ENCODE measurements at regions of chr11 and their contacts with region 1.

Region 1: DNA sequence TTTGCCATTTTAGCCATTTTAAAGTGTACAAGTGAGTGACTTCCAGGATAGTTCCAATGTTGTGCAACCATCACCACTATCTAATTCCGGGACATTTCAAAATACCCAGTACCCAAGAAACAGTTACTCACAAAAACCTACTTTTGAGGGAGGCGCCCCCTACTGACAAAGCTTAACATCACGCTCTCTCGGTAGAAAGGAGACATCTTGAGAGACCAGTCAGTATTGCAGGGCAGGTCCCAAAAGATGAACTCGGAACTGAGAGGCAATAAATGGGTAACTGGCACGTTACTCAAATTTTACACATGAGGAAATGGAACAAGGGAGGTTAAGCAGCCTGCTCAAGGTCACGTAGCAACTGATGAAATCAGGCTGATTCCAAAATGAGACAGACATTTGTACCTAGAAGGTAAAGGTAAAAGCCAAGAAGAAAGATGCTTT is 50.0 kb upstream of the POU2AF1 start:
- DNase-seq: peak; percentile 79
- ATAC-seq: peak; percentile 51
- H3K4me3 Mint-ChIP-seq: no peak overlapping the region
- H3K27ac Mint-ChIP-seq: no peak overlapping the region
- H3K4me1 Mint-ChIP-seq: no peaks in the 10 kb centered on the region
- H3K27me3 Mint-ChIP-seq: peaks cover 12% of the 10 kb centered on the region

Region 2: GRCh38 chr11:111283945-111284481 is 145.1 kb before region 1 on chr11:
- CTCF ChIA-PET with region 1: interaction called, 95 read pairs
- POLR2A ChIA-PET with region 1: interaction called, 3 read pairs
- DNase-seq: no peak
- ATAC-seq: no peak
- H3K4me3 Mint-ChIP-seq: no peak overlapping the region
- H3K27ac Mint-ChIP-seq: no peak overlapping the region
- H3K4me1 Mint-ChIP-seq: no peaks in the 10 kb centered on the region
- H3K27me3 Mint-ChIP-seq: peaks cover 3% of the 10 kb centered on the region

Region 3: GRCh38 chr11:111378861-111379601 is 50.1 kb before region 1 on chr11 and contains the start of gene POU2AF1:
- CTCF ChIA-PET with region 1: interaction called, 18 read pairs
- POLR2A ChIA-PET with region 1: no interaction called
- DNase-seq: peak; percentile 89
- ATAC-seq: peak; percentile 87
- H3K4me3 Mint-ChIP-seq: peak within 1 kb of the TSS; percentile 70
- H3K27ac Mint-ChIP-seq: peak within 1 kb of the TSS; percentile 95
- H3K4me1 Mint-ChIP-seq: peaks cover 41% of the 10 kb centered on the region
- H3K27me3 Mint-ChIP-seq: no peaks in the 10 kb centered on the region
- total RNA-seq, gene POU2AF1: 1.7 to 2.4 TPM

Region 4: DNA sequence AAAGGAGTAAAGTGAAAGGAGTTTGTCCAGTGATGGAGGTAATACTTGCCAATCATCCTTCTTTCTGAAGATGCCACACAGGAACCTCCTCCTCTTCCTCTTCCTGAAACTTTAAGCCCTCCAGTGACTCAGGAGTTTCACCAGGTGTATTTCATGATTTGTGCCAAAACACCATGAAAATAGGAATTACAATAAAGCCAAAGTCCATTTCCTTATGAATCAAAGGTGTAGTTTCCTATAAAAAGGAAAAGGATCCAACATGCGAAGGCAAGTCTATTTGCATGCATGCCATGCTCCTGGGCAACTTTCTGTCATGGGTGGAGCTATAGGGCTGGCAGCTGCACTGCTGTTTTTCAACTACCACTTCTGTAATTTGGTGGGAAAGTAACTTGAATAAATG is 40.2 kb before region 1 on chr11:
- CTCF ChIA-PET with region 1: interaction called, 11 read pairs
- POLR2A ChIA-PET with region 1: no interaction called
- DNase-seq: no peak
- ATAC-seq: no peak
- H3K4me3 Mint-ChIP-seq: no peak overlapping the region
- H3K27ac Mint-ChIP-seq: no peak overlapping the region
- H3K4me1 Mint-ChIP-seq: peaks cover 22% of the 10 kb centered on the region
- H3K27me3 Mint-ChIP-seq: no peaks in the 10 kb centered on the region

Region 5: GRCh38 chr11:111408789-111409727 is 20.0 kb before region 1 on chr11:
- CTCF ChIA-PET with region 1: interaction called, 158 read pairs
- POLR2A ChIA-PET with region 1: no interaction called
- DNase-seq: no peak
- ATAC-seq: no peak
- H3K4me3 Mint-ChIP-seq: no peak overlapping the region
- H3K27ac Mint-ChIP-seq: no peak overlapping the region
- H3K4me1 Mint-ChIP-seq: peaks cover 22% of the 10 kb centered on the region
- H3K27me3 Mint-ChIP-seq: no peaks in the 10 kb centered on the region

Region 6: GRCh38 chr11:111446404-111447111 is 17.5 kb after region 1 on chr11:
- CTCF ChIA-PET with region 1: interaction called, 47 read pairs
- POLR2A ChIA-PET with region 1: no interaction called
- DNase-seq: peak; percentile 89
- ATAC-seq: peak; percentile 99
- H3K4me3 Mint-ChIP-seq: no peak overlapping the region
- H3K27ac Mint-ChIP-seq: peak overlapping the region; percentile 48
- H3K4me1 Mint-ChIP-seq: peaks cover 17% of the 10 kb centered on the region
- H3K27me3 Mint-ChIP-seq: peaks cover 4% of the 10 kb centered on the region